ENCODE measurements at regions of chr1 and their contacts with region 1.

Region 1: GRCh38 chr1:64823691-64824476 is 79.0 kb downstream of the RAVER2 start:
- DNase-seq: peak; percentile 80

Region 2: DNA sequence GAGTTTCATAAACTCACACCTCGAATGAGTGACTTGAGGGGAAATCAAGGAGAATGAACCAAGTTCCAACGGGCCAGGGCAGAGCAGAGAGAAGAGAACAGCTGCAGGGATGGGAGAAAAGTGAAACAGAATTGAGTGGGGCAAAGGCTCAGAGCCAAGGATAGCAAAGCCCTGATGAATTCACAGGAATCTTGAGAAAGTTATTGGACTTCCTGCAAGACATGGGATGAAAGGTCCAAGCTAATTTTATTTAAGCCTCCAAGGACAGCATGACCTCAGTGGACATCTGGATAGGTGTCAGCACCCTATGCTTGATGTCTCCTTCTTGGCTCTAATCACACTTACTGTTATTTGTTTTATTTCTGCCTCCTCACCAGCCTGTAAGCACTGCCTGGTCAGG is 122.0 kb before region 1 on chr1:
- in situ Hi-C with region 1: loop called (anchors 25 kb)
- DNase-seq: no peak

Region 3: GRCh38 chr1:64956733-64957441 is 133.0 kb after region 1 on chr1:
- in situ Hi-C with region 1: no loop called
- DNase-seq: no peak